ENCODE measurements at regions of chr10 and their contacts with region 1.

Region 1: GRCh38 chr10:91551856-91552255 is 81.0 kb downstream of the PPP1R3C start:
- DNase-seq: no peak
- H3K4me3 ChIP-seq: no peak overlapping the region
- H3K27ac ChIP-seq: no peak overlapping the region
- H3K4me1 ChIP-seq: peaks cover 0 to 3% of the 10 kb centered on the region in 2 donors
- H3K27me3 ChIP-seq: no peaks in the 10 kb centered on the region
- CTCF ChIP-seq: no peak
- POLR2A ChIP-seq: no peak

Region 2: DNA sequence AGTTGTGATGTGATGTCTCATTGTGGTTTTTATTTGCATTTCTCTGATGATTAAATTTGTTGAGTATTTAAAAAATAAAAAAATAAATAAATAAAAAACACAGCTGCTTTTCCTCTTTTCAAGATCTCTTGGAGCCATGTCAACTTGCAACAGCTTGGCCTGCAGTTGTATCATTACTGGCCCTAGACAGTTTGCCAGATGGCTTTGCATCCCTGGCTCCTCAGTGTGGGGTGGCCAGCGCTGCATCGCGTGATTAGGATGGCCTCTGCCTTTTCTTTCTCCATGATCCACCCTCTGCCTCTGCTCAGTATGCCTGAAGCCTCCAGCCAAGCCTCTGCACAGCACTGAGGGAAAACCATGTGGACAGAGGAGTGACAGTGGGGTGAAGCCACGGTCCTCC is 15.7 kb before region 1 on chr10:
- intact Hi-C with region 1: no loop called
- DNase-seq: no peak
- H3K4me3 ChIP-seq: no peak overlapping the region
- H3K27ac ChIP-seq: no peak overlapping the region
- H3K4me1 ChIP-seq: no peaks in the 10 kb centered on the region
- H3K27me3 ChIP-seq: no peaks in the 10 kb centered on the region
- CTCF ChIP-seq: no peak
- POLR2A ChIP-seq: no peak

Region 3: GRCh38 chr10:91575044-91575610 is 23.3 kb after region 1 on chr10:
- intact Hi-C with region 1: loop called (anchors 1 kb)
- DNase-seq: peak in 1 of 2 donors; percentile 79
- H3K4me3 ChIP-seq: no peak overlapping the region
- H3K27ac ChIP-seq: peak overlapping the region; percentile 85 to 90
- H3K4me1 ChIP-seq: peaks cover 0 to 11% of the 10 kb centered on the region in 2 donors
- H3K27me3 ChIP-seq: no peaks in the 10 kb centered on the region
- CTCF ChIP-seq: no peak
- POLR2A ChIP-seq: no peak

Measured in breast epithelium (tissue), 4 donors.